ENCODE measurements at regions of chr20 and their contacts with region 1.

Region 1: DNA sequence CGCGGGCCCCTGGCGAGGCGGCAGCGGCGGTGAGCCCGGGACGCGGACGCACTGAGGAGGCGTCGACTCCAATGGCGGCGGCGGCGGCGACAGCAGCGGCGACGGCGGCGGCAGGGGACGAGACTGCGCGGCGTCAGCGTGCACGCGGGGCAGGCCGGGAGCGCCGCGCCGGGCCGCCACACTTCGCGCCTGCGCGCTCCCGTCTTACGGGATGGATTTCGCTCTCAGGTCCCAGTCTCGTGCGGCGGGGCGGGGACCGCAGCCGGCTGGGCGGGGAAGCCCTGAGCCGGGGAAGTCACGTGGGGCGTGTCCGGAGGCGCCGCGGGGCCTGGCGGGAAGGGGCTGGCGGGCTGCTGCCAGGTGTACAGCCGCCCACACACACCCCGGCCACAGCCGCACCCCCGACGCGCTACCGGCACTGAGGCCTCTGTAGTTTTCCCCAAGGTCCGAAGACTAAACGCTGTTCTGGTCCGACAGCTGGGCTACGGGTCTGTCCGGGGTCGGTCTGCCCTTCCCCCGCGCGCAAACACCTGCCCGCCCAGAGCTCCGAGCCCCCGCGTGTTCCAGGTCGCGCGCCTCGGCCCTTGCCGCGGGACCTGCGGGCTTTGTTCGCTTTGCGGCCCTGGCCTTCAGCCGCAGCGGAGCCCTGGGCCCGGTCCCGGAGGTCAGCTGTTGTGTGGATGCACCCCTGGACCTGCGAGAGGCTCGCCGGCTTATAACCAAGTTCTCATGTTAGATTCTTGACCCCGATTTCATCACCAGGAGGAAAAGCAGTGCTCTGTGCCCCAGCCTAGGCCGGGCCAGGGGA is at the start of gene YTHDF1:
- DNase-seq: peak; percentile 69
- H3K4me3 ChIP-seq: peak within 1 kb of the TSS; percentile 80
- CTCF ChIP-seq: no peak

Region 2: DNA sequence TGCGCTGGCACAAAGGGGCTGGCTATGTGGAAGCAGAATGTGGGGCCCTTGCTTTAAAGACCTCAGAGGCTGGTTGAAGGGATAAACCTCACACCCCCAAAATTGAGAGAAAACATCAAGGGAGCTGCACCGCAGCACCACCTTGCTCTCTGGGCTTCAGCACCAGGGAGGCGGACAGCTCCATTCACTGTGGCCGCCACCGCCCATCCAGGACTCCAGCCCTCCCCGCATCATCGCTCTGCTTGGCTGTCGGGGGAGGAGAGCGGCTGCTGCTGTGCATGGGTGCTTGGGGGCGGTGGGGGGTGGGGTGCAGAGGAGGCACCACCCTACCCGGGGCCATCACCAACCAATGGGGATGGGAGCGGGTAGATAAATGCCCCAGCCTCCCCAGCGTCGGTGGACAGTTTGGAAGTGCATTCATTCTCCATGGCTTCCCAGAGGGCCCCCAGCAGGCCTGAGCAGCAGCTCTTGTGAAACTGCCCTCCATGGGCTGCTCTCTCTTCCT is 133.9 kb before region 1 on chr20:
- in situ Hi-C with region 1: loop called (anchors 25 kb)
- DNase-seq: no peak
- H3K4me3 ChIP-seq: no peak overlapping the region
- CTCF ChIP-seq: no peak

Region 3: GRCh38 chr20:63253438-63254236 is 37.4 kb after region 1 on chr20:
- in situ Hi-C with region 1: no loop called
- DNase-seq: no peak
- H3K4me3 ChIP-seq: no peak overlapping the region
- CTCF ChIP-seq: no peak

Region 4: DNA sequence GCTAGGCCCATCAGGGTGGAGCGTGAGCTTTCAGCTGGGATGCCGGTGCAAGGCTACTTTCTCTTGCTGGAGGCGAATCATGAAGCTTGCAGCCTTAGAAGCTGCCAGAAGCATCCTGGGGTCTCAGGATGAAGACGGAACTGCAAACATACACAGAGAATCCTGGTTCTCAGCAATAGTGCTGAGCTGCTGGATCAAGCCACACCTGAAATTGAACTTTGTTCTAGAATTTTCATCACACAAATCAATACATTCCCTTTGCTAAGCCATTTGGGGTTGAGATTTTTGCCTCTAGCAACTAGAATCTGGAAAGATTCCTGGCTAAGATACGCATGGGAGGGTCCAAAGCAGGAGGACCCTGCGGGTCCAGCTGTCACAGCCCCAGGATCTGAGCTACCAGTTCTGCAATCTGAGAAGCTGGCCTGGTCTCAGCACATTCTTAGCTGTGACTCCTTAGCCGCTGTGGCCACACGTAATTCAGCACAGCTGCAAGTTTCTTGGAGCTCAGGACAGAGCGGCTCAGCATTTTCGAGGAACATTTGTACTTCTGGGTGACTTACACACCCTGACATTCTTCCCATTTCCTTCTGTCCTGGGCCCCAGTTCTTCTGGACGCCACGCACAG is 49.8 kb after region 1 on chr20:
- in situ Hi-C with region 1: no loop called
- DNase-seq: peak; percentile 24
- H3K4me3 ChIP-seq: no peak overlapping the region
- CTCF ChIP-seq: no peak